Aorta (tissue), 5 donors: ENCODE measurements at regions of chr2 and their contacts with region 1.

Region 1: GRCh38 chr2:241877989-241878970 is 8.8 kb downstream of the RTP5 start:
- DNase-seq: peak; percentile 79 to 92
- ATAC-seq: no peak
- H3K4me3 ChIP-seq: no peak overlapping the region
- H3K27ac ChIP-seq: no peak overlapping the region
- H3K4me1 ChIP-seq: no peaks in the 10 kb centered on the region
- H3K27me3 ChIP-seq: no peaks in the 10 kb centered on the region

Region 2: GRCh38 chr2:241724259-241724974 is 153.9 kb before region 1 on chr2:
- intact Hi-C with region 1: loop called in 1 of 2 experiments (anchors 10 kb)
- DNase-seq: no peak
- ATAC-seq: no peak
- H3K4me3 ChIP-seq: no peak overlapping the region
- H3K27ac ChIP-seq: no peak overlapping the region
- H3K4me1 ChIP-seq: no peaks in the 10 kb centered on the region
- H3K27me3 ChIP-seq: no peaks in the 10 kb centered on the region

Region 3: GRCh38 chr2:241734467-241735208 is 143.6 kb before region 1 on chr2 and contains the start of gene D2HGDH:
- intact Hi-C with region 1: loop called (anchors 10 kb)
- DNase-seq: peak; percentile 96 to 99
- ATAC-seq: peak; percentile 96
- H3K4me3 ChIP-seq: peak within 1 kb of the TSS; percentile 66 to 88
- H3K27ac ChIP-seq: peak within 1 kb of the TSS in 1 of 2 donors; percentile 60
- H3K4me1 ChIP-seq: no peaks in the 10 kb centered on the region
- H3K27me3 ChIP-seq: peaks cover 0 to 2% of the 10 kb centered on the region in 2 donors
- total RNA-seq, gene D2HGDH: 20.5 to 29.9 TPM